Naive thymus-derived CD8-positive, alpha-beta T cell (primary cell): ENCODE measurements at regions of chr3 and their contacts with region 1.

Region 1: GRCh38 chr3:150703299-150704134 is at the start of gene ERICH6:
- DNase-seq: peak; percentile 61 to 89 (median 79)
- ATAC-seq: peak; percentile 82 to 85
- H3K4me3 Mint-ChIP-seq: peak within 1 kb of the TSS; percentile 90 to 99 (median 97)
- H3K27ac Mint-ChIP-seq: peak within 1 kb of the TSS; percentile 93 to 100 (median 98)
- H3K4me1 Mint-ChIP-seq: peaks cover 14 to 32% (median 27%) of the 10 kb centered on the region in 4 donors
- H3K27me3 Mint-ChIP-seq: no peaks in the 10 kb centered on the region
- polyA plus RNA-seq, gene ERICH6: 0.14 to 0.60 (median 0.27) TPM

Region 2: DNA sequence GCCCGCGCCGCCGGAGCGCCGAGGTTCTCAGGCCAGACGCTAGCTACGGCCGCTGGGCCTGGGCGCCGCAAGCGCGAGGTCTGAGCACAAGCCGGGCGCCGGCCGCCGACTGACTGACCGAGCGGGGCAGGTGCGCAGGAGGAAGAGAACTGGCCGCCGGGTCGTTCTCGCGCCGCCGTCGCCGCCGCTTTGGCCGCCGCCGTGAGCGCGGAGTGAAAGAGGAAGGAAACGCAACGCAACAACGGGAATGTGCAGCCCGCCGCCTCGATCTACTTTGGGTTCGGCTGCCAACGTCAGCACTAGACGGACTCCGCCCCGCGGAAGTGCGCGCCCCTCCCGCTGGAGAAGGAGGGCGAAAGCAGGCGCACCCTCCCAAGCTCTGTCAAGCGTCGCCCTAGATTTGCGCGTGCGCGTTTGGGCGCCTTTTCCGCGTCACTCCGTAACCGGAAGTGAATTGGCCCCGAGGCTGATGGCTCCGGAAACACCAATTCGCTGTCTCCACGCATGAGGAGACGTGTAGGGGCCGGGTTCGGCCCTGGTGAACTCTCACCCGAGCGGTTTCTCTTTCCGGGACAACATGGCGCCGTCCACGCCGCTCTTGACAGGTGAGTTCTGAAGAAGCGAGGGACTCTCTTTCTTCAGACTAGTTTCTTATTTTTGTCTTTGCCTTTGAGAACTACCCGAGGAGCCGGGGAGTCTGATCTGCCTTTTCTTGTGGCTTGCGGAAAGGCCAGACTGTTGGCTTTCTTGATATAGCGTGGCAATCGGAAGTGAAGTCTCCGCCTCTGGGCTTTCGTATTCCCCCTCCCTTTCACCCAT is 157.1 kb before region 1 on chr3 and contains the starts of genes EIF2A and SERP1:
- POLR2A ChIA-PET with region 1: interaction called, 24 read pairs
- DNase-seq: peak; percentile 96 to 100 (median 99)
- ATAC-seq: peak; percentile 89 to 90
- H3K4me3 Mint-ChIP-seq: peak within 1 kb of the TSS; percentile 92 to 99 (median 96)
- H3K27ac Mint-ChIP-seq: peak within 1 kb of the TSS; percentile 97 to 100 (median 98)
- H3K4me1 Mint-ChIP-seq: peaks cover 25 to 84% (median 75%) of the 10 kb centered on the region in 4 donors
- H3K27me3 Mint-ChIP-seq: no peaks in the 10 kb centered on the region
- polyA plus RNA-seq, gene EIF2A: 47.7 to 67.2 (median 50.8) TPM
- polyA plus RNA-seq, gene SERP1: 121 to 165 (median 144) TPM

Region 3: GRCh38 chr3:150603153-150603979 is 100.2 kb before region 1 on chr3 and contains the start of gene SELENOT:
- POLR2A ChIA-PET with region 1: interaction called, 24 read pairs
- DNase-seq: peak; percentile 90 to 97 (median 95)
- ATAC-seq: peak; percentile 86
- H3K4me3 Mint-ChIP-seq: peak within 1 kb of the TSS; percentile 97 to 99 (median 98)
- H3K27ac Mint-ChIP-seq: peak within 1 kb of the TSS; percentile 98 to 100 (median 99)
- H3K4me1 Mint-ChIP-seq: peaks cover 33 to 90% (median 65%) of the 10 kb centered on the region in 4 donors
- H3K27me3 Mint-ChIP-seq: peaks cover 0 to 4% (median 0%) of the 10 kb centered on the region in 5 donors
- polyA plus RNA-seq, gene SELENOT: 142 to 267 (median 173) TPM

Region 4: DNA sequence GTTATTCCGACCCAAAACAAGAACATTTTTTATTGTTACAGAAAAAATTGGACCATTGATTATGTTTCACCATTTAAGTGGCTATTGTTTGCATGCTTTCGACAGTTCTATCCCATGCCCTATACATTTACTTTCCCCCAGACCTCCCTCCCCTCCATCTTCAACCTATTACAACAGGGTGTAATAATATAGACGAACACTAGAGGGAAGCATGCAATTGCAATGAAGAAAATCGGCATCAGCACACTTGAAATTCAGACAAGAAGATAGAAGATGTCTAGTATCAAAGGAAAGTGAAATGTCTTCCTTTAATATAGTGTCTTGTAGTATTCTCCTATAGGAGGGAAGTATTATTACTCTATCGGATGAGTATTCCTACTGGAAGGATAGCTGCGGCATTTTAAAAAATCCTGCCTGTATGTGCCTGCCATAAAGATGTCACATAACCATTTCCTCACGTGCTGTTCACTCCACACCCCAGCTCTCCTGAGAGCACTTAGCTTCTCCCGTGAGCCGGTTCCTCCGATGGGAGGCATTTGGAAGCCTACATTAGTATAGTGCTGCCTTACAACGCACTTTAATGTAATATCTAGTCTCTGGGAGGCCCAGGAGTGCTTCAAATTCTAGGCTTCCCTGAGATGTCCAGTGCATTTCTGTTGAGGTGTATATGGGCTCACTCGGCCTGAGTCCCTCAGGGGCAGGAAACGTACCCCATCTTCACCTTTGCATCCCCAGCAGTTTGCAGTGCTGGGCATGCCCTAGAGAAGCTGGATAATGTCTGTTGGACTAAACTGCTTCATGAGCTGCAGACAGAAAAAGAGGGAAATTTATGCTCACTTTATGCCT is 18.0 kb after region 1 on chr3:
- POLR2A ChIA-PET with region 1: no interaction called
- DNase-seq: peak in 5 of 10 donors; percentile 18 to 76 (median 68)
- ATAC-seq: peak; percentile 85 to 90
- H3K4me3 Mint-ChIP-seq: no peak overlapping the region
- H3K27ac Mint-ChIP-seq: no peak overlapping the region
- H3K4me1 Mint-ChIP-seq: peaks cover 0 to 16% (median 10%) of the 10 kb centered on the region in 4 donors
- H3K27me3 Mint-ChIP-seq: no peaks in the 10 kb centered on the region